PC-3 (cell line): ENCODE measurements at regions of chr13 and their contacts with region 1.

Region 1: GRCh38 chr13:100235311-100235901 is 146.5 kb downstream of the PCCA start:
- DNase-seq: peak; percentile 63
- ATAC-seq: no peak
- H3K4me3 ChIP-seq: no peak overlapping the region
- H3K27ac ChIP-seq: no peak overlapping the region
- H3K4me1 ChIP-seq: no peaks in the 10 kb centered on the region; the same call in 1 of the 2 replicates
- H3K27me3 ChIP-seq: no peaks in the 10 kb centered on the region
- CTCF ChIP-seq: peak; percentile 71

Region 2: DNA sequence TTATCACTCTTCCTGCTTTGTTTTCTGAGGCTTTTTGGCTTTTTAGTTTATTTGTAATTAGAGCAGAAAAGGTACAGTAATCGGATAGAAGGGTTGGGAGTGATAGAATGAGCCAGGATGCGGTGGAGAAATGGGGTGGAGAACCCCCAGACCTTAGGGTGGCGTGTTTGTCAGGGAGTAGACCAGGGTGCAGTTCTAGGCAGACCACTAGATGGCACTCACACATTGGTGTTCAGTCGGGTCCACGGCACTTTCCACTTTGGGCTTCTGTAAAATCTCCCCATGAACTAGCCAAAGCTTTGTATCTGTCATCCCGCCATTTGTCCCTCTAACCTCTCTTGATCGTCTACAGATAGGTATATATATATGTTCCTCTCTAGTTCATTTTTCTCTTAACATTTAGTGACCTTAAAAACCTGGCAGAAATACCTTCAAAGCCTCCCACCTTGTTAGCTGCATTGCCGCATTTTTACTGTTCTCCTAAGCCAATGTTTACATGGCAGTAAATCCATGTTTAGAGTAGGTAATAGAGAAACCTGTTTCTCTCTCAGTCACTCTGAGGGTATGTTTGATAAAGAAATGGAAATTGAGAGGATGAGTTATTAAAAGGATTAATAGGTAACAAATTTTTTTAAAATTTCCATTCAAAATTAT is 579.2 kb before region 1 on chr13:
- CTCF ChIA-PET with region 1: no interaction called
- POLR2A ChIA-PET with region 1: no interaction called
- intact Hi-C with region 1: loop called (anchors 1 kb)
- DNase-seq: peak; percentile 72
- ATAC-seq: peak; percentile 87
- H3K4me3 ChIP-seq: peak overlapping the region; percentile 27; the same call in 1 of the 2 replicates
- H3K27ac ChIP-seq: no peak overlapping the region
- H3K4me1 ChIP-seq: no peaks in the 10 kb centered on the region
- H3K27me3 ChIP-seq: no peaks in the 10 kb centered on the region
- CTCF ChIP-seq: peak; percentile 85

Region 3: GRCh38 chr13:99774659-99775058 is 460.7 kb before region 1 on chr13:
- CTCF ChIA-PET with region 1: no interaction called
- POLR2A ChIA-PET with region 1: no interaction called
- intact Hi-C with region 1: no loop called
- DNase-seq: no peak
- ATAC-seq: no peak
- H3K4me3 ChIP-seq: no peak overlapping the region
- H3K27ac ChIP-seq: no peak overlapping the region
- H3K4me1 ChIP-seq: no peaks in the 10 kb centered on the region
- H3K27me3 ChIP-seq: no peaks in the 10 kb centered on the region
- CTCF ChIP-seq: no peak

Region 4: GRCh38 chr13:99916366-99917103 is 318.9 kb before region 1 on chr13:
- CTCF ChIA-PET with region 1: interaction called, 13 read pairs
- POLR2A ChIA-PET with region 1: no interaction called
- intact Hi-C with region 1: loop called (anchors 1 kb)
- DNase-seq: peak; percentile 69
- ATAC-seq: peak; percentile 88
- H3K4me3 ChIP-seq: no peak overlapping the region
- H3K27ac ChIP-seq: no peak overlapping the region
- H3K4me1 ChIP-seq: no peaks in the 10 kb centered on the region
- H3K27me3 ChIP-seq: peaks cover 22% of the 10 kb centered on the region
- CTCF ChIP-seq: peak; percentile 95

Region 5: DNA sequence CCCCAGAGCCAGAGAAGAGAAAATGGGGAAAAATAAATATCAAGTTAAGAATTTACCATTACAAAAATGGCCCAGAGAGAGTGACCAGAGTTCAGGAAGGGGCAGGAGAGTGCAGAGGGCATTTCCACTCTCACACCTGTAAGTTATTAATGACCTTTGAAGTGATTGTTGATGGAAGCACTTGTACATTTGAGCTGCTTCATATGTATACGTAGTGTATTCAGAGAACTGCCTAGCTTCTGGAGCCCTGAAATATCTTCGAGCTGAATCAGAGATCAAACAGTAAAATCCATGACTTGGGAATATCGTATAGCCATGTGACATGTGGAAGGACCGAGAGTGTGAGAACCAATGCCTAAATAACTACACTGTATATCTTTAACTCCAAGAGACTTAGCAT is 195.7 kb before region 1 on chr13:
- CTCF ChIA-PET with region 1: interaction called, 4 read pairs
- POLR2A ChIA-PET with region 1: no interaction called
- intact Hi-C with region 1: loop called (anchors 1 kb)
- DNase-seq: peak; percentile 53
- ATAC-seq: peak; percentile 64
- H3K4me3 ChIP-seq: peak overlapping the region; percentile 30; the same call in 1 of the 2 replicates
- H3K27ac ChIP-seq: no peak overlapping the region
- H3K4me1 ChIP-seq: peaks cover 9% of the 10 kb centered on the region; the same call in 1 of the 2 replicates
- H3K27me3 ChIP-seq: no peaks in the 10 kb centered on the region
- CTCF ChIP-seq: no peak

Region 6: GRCh38 chr13:100069278-100069677 is 166.1 kb before region 1 on chr13:
- CTCF ChIA-PET with region 1: interaction called, 12 read pairs
- POLR2A ChIA-PET with region 1: no interaction called
- intact Hi-C with region 1: no loop called
- DNase-seq: no peak
- ATAC-seq: no peak
- H3K4me3 ChIP-seq: no peak overlapping the region
- H3K27ac ChIP-seq: no peak overlapping the region
- H3K4me1 ChIP-seq: no peaks in the 10 kb centered on the region
- H3K27me3 ChIP-seq: no peaks in the 10 kb centered on the region
- CTCF ChIP-seq: no peak

Region 7: DNA sequence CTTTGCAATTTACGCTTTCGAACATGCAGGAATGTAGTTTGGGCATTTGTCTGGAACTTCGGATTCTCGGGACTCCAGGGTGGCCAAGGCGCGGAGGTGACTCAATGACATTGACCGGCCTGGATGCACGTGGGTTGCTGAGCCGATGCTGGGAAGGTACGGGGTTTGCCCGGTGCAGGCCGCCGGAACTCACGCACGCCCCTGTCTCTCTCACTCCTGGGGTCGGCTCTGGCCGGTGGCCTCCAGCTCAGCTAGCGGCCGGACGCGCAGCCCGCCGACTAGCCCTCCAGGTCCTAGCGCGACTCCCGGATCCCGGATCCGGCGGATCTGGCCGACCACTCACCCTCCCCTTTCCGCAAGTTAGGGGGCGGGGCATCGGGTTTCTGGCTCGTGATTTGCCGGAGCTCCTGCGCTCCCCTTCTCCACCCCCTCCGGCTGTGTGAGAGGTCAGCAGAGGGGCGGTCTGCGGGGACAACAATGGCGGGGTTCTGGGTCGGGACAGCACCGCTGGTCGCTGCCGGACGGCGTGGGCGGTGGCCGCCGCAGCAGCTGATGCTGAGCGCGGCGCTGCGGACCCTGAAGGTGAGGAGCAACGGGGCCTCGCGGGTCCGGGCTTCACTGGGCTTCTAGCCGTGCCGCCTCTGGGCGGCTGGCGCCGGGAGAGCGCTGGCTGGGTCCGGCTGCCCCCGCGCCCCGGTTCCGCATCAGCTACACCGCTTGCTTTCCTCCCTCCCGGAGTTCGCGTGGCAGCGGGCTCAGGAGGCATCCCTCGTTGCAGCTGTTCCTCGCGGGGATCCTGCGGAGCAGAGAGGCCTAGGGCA is 146.6 kb before region 1 on chr13 and contains the start of gene PCCA:
- CTCF ChIA-PET with region 1: interaction called, 4 read pairs
- POLR2A ChIA-PET with region 1: interaction called, 7 read pairs
- intact Hi-C with region 1: loop called (anchors 5 kb)
- DNase-seq: peak; percentile 86
- ATAC-seq: peak; percentile 92
- H3K4me3 ChIP-seq: peak within 1 kb of the TSS; percentile 88
- H3K27ac ChIP-seq: no peak within 1 kb of the TSS
- H3K4me1 ChIP-seq: peaks cover 11% of the 10 kb centered on the region; the same call in 1 of the 2 replicates
- H3K27me3 ChIP-seq: no peaks in the 10 kb centered on the region
- CTCF ChIP-seq: no peak
- total RNA-seq, gene PCCA: 7.5 and 10.5 TPM in 2 replicates

Region 8: GRCh38 chr13:100514788-100515409 is 279.5 kb after region 1 on chr13:
- CTCF ChIA-PET with region 1: interaction called, 6 read pairs
- POLR2A ChIA-PET with region 1: interaction called, 4 read pairs
- intact Hi-C with region 1: loop called (anchors 1 kb)
- DNase-seq: peak; percentile 69
- ATAC-seq: peak; percentile 96
- H3K4me3 ChIP-seq: no peak overlapping the region
- H3K27ac ChIP-seq: no peak overlapping the region
- H3K4me1 ChIP-seq: peaks cover 4% of the 10 kb centered on the region; the same call in 1 of the 2 replicates
- H3K27me3 ChIP-seq: no peaks in the 10 kb centered on the region
- CTCF ChIP-seq: peak; percentile 91